B cell (primary cell): ENCODE measurements at regions of chr10 and their contacts with region 1.

Region 1: DNA sequence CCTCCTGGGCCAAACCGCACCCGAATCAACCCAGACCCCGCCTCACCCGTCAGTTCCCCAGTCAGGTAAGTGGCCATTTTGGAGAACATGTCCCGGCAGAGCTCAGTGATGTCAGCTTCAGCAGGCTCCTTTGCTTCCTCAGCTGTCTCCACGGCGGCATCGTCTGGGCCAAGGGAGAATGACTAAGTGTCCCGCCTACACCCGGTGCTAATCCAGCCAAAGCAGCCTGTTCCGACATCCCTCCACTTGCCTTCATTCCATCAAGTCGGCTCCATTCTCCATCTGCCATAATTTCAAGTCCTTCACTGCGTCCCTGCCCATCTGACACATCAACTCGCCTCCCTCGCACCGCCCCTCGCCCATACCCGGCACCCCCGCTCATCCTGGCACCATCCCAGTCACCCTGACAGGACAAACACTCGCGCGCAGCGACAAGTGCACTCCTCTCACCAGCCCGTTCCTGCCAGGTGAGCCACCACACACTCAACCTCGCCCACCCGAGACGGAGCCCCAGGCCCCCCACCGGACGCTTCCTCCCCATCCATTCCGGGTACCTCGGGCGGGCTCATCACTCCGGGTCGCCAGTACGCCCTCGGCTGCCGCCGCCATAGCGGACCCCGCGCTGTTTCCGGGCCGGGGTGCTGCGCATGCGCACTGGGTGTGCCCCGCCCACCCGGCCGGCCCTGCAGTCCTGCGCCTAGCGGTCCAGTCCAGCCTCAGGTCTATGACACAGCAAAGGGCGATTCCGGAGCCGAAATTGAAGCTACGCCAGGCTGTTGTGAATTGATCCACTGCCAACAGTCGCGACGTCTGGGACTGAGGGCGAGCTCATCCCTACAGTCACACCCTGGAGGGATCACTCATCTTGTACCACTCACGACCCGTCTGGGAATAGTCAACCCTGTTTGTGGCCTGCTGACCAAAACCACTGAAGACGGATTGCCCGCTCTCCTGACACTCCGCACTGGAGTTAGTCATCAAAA is at the start of gene BLOC1S2:
- DNase-seq: peak; percentile 91
- ATAC-seq: peak; percentile 90
- H3K4me3 ChIP-seq: peak within 1 kb of the TSS; percentile 69 to 100 (median 99)
- H3K4me3 Mint-ChIP-seq: peak within 1 kb of the TSS; percentile 98
- H3K27ac ChIP-seq: peak within 1 kb of the TSS; percentile 92 to 96
- H3K27ac Mint-ChIP-seq: peak within 1 kb of the TSS; percentile 96
- H3K4me1 ChIP-seq: peaks cover 48 to 53% of the 10 kb centered on the region in 2 donors
- H3K4me1 Mint-ChIP-seq: peaks cover 35% of the 10 kb centered on the region
- H3K27me3 ChIP-seq: no peaks in the 10 kb centered on the region
- H3K27me3 Mint-ChIP-seq: peaks cover 1% of the 10 kb centered on the region
- CTCF ChIP-seq: no peak
- total RNA-seq, gene BLOC1S2: 47.2 and 47.5 TPM in 2 replicates

Region 2: GRCh38 chr10:100267237-100268104 is 18.9 kb before region 1 on chr10 and contains the start of gene CWF19L1:
- CTCF ChIA-PET with region 1: no interaction called
- POLR2A ChIA-PET with region 1: no interaction called
- intact Hi-C with region 1: loop called (anchors 1 kb)
- DNase-seq: peak; percentile 84
- ATAC-seq: peak; percentile 85
- H3K4me3 ChIP-seq: peak within 1 kb of the TSS; percentile 78 to 100 (median 100)
- H3K4me3 Mint-ChIP-seq: peak within 1 kb of the TSS; percentile 97
- H3K27ac ChIP-seq: peak within 1 kb of the TSS; percentile 87 to 88
- H3K27ac Mint-ChIP-seq: peak within 1 kb of the TSS; percentile 99
- H3K4me1 ChIP-seq: peaks cover 23 to 25% of the 10 kb centered on the region in 2 donors
- H3K4me1 Mint-ChIP-seq: peaks cover 31% of the 10 kb centered on the region
- H3K27me3 ChIP-seq: no peaks in the 10 kb centered on the region
- H3K27me3 Mint-ChIP-seq: no peaks in the 10 kb centered on the region
- CTCF ChIP-seq: no peak
- total RNA-seq, gene CWF19L1: 48.3 and 52.8 TPM in 2 replicates

Region 3: GRCh38 chr10:100297242-100297641 is 10.9 kb after region 1 on chr10:
- CTCF ChIA-PET with region 1: no interaction called
- POLR2A ChIA-PET with region 1: no interaction called
- intact Hi-C with region 1: no loop called
- DNase-seq: no peak
- ATAC-seq: no peak
- H3K4me3 ChIP-seq: no peak overlapping the region
- H3K4me3 Mint-ChIP-seq: no peak overlapping the region
- H3K27ac ChIP-seq: no peak overlapping the region
- H3K27ac Mint-ChIP-seq: no peak overlapping the region
- H3K4me1 ChIP-seq: peaks cover 10 to 12% of the 10 kb centered on the region in 2 donors
- H3K4me1 Mint-ChIP-seq: peaks cover 18% of the 10 kb centered on the region
- H3K27me3 ChIP-seq: peaks cover 0 to 19% (median 4%) of the 10 kb centered on the region in 4 experiments
- H3K27me3 Mint-ChIP-seq: peaks cover 35% of the 10 kb centered on the region
- CTCF ChIP-seq: no peak

Region 4: GRCh38 chr10:100319707-100320106 is 33.4 kb after region 1 on chr10:
- CTCF ChIA-PET with region 1: no interaction called
- POLR2A ChIA-PET with region 1: no interaction called
- intact Hi-C with region 1: no loop called
- DNase-seq: no peak
- ATAC-seq: no peak
- H3K4me3 ChIP-seq: no peak overlapping the region
- H3K4me3 Mint-ChIP-seq: no peak overlapping the region
- H3K27ac ChIP-seq: no peak overlapping the region
- H3K27ac Mint-ChIP-seq: no peak overlapping the region
- H3K4me1 ChIP-seq: no peaks in the 10 kb centered on the region
- H3K4me1 Mint-ChIP-seq: no peaks in the 10 kb centered on the region
- H3K27me3 ChIP-seq: peaks cover 0 to 18% (median 5%) of the 10 kb centered on the region in 4 experiments
- H3K27me3 Mint-ChIP-seq: peaks cover 34% of the 10 kb centered on the region
- CTCF ChIP-seq: no peak